ENCODE measurements at regions of chr1 and their contacts with region 1.

Region 1: GRCh38 chr1:167803358-167804207 is 81.8 kb downstream of the MPZL1 start:
- DNase-seq: peak; percentile 94
- ATAC-seq: peak; percentile 96

Region 2: DNA sequence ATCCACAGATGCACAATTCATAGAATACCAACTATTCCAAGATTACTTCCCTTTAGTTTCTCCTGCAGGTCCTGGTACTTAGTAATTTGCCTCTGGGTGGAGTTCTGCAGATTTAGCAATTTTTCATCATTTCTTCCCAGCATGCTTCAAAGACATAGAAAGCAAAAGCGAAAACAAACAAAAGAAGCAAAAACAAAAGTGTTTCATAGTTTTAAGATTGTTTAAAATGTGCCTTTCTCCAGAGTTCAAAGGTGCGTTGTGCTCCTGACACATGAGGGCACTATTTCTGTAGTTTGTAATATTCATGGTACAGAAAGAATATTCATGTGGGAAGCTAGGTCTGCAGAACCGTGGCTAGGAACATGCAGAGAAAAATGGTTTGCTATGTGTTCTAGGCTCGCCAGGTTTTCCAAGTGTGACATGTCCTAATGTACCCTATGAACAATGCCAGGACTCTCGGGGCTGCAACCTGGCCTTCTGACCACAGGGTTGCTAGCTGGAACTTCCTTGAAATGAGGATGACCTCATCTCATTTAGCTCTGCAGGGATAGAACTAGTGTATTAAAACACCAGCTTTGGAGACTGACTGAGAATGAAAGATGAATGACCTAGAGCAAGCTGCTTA is 203.5 kb before region 1 on chr1:
- intact Hi-C with region 1: loop called (anchors 10 kb)
- DNase-seq: peak; percentile 75
- ATAC-seq: peak; percentile 70

Region 3: GRCh38 chr1:167721617-167722151 is 81.9 kb before region 1 on chr1 and contains the start of gene MPZL1:
- intact Hi-C with region 1: loop called (anchors 1 kb)
- DNase-seq: peak; percentile 97
- ATAC-seq: peak; percentile 99
- total RNA-seq, gene MPZL1: 47.9 TPM

Measured in Right ventricle myocardium inferior (tissue), 1 donor.